ENCODE measurements at regions of chr3 and their contacts with region 1.

Region 1: DNA sequence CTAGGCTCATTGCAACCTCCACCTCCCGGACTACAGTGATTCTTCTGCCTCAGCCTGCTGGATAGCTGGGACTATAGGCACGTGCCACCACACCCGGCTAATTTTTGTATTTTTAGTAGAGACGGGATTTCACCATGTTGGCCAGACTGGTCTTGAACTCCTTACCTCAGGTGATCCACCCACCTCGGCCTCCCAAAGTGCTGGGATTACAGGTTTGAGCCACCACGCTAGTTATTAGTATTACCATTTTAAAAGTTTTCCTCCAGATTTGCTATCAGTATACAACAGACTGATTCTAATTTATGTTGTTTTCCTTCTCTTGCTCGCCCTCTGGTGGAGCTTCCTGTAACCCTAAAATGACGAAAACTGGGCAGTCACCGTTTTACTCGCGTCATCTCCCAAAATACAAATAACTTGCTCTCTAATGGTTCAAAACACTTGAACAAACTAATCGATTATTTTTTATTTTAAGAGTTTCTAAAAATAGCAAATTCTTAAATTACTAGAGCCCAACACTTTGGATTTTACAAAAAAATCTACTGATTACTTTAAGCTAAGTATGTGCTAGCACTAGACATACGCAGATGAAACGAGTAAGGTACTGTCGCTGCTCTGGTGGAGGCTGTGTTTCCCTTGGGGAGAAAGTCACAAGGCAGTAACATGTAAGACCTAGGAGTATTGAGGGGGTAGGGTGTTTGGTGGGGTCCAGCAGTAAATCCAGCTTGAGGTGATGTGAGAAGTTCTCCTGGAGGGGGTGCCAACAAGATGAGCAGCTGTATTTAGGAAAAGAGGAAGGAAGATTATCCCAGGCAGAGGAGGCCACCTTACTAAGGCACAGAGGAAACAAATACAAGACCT is 203.3 kb downstream of the MBNL1 start:
- DNase-seq: peak; percentile 73
- H3K4me3 Mint-ChIP-seq: peak overlapping the region; percentile 1
- H3K27ac Mint-ChIP-seq: no peak overlapping the region
- H3K4me1 Mint-ChIP-seq: peaks cover 10% of the 10 kb centered on the region
- H3K27me3 Mint-ChIP-seq: peaks cover 8% of the 10 kb centered on the region

Region 2: DNA sequence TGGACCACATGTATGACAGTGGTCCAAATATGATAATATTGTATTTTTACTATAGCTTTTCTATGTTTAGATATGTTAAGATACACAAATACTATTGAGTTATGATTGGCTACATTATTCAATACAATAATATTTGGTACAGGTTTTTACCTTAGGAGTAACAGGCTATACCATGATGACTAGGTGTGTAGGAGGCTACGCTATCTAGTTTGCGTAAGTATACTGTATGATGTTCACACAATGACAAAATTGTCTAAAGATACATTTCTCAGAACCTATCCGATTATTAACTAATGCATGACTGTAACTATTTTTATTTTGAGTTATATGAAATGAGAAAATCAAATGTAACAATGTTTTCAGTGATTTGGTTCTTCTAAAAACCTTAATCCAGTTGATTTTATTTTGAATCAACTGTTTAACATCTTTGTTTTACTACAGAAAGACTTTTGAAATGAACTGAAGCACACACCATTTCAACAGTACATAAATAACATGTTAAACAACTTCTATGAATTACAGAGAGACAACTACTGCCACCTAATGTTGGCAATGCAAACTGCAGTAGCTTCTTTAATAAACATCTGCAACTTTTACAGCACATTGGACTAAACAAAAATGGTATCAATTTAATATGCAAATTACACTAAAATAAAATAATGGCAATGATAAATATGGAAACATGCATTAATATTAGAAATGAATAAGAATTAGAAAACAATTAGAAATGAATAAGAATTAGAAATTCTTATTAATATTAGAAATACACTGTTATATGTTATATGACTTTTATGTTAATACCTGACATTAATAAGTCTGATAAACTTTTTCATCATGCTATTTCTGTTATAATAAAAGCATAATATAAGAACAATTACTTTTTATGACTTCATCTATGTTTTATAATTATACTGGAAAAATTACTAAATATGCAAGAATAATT is 52.4 kb after region 1 on chr3:
- CTCF ChIA-PET with region 1: interaction called, 10 read pairs
- POLR2A ChIA-PET with region 1: no interaction called
- DNase-seq: peak; percentile 36
- H3K4me3 Mint-ChIP-seq: no peak overlapping the region
- H3K27ac Mint-ChIP-seq: no peak overlapping the region
- H3K4me1 Mint-ChIP-seq: no peaks in the 10 kb centered on the region
- H3K27me3 Mint-ChIP-seq: peaks cover 2% of the 10 kb centered on the region

Measured in activated CD4-positive, alpha-beta memory T cell treated with anti-CD3 and anti-CD28 coated beads, Interleukin-2, amount 10 ng/mL, durations not matched to agents 7 days and 5 days (primary cell).